ENCODE measurements at regions of chr19 and their contacts with region 1.

Region 1: GRCh38 chr19:19138169-19138981 is at the start of gene TMEM161A:
- DNase-seq: peak; percentile 98 to 99 (median 98)
- ATAC-seq: peak; percentile 100
- H3K4me3 ChIP-seq: peak within 1 kb of the TSS; percentile 17 to 31
- H3K27ac ChIP-seq: peak within 1 kb of the TSS in 3 of 4 donors; percentile 52 to 59 (median 52)
- H3K4me1 ChIP-seq: peaks cover 15% of the 10 kb centered on the region
- H3K27me3 ChIP-seq: no peaks in the 10 kb centered on the region
- CTCF ChIP-seq: peak in 1 of 7 experiments; percentile 1
- POLR2A ChIP-seq: peak in 2 of 3 donors; percentile 77 to 83
- total RNA-seq, gene TMEM161A: 13.7 to 22.1 TPM

Region 2: GRCh38 chr19:19053508-19054314 is 84.7 kb before region 1 on chr19:
- intact Hi-C with region 1: loop called (anchors 10 kb)
- DNase-seq: peak; percentile 52 to 72 (median 66)
- ATAC-seq: peak; percentile 64
- H3K4me3 ChIP-seq: no peak overlapping the region
- H3K27ac ChIP-seq: no peak overlapping the region
- H3K4me1 ChIP-seq: no peaks in the 10 kb centered on the region
- H3K27me3 ChIP-seq: no peaks in the 10 kb centered on the region
- CTCF ChIP-seq: peak; percentile 39 to 72 (median 61)
- POLR2A ChIP-seq: no peak

Region 3: GRCh38 chr19:19081642-19082151 is 56.7 kb before region 1 on chr19:
- intact Hi-C with region 1: no loop called
- DNase-seq: peak in 1 of 4 donors; percentile 22
- ATAC-seq: no peak
- H3K4me3 ChIP-seq: no peak overlapping the region
- H3K27ac ChIP-seq: no peak overlapping the region
- H3K4me1 ChIP-seq: no peaks in the 10 kb centered on the region
- H3K27me3 ChIP-seq: no peaks in the 10 kb centered on the region
- CTCF ChIP-seq: no peak
- POLR2A ChIP-seq: no peak

Measured in body of pancreas (tissue), 4 donors.